Psoas muscle (tissue), 8 donors: ENCODE measurements at regions of chr17 and their contacts with region 1.

Region 1: DNA sequence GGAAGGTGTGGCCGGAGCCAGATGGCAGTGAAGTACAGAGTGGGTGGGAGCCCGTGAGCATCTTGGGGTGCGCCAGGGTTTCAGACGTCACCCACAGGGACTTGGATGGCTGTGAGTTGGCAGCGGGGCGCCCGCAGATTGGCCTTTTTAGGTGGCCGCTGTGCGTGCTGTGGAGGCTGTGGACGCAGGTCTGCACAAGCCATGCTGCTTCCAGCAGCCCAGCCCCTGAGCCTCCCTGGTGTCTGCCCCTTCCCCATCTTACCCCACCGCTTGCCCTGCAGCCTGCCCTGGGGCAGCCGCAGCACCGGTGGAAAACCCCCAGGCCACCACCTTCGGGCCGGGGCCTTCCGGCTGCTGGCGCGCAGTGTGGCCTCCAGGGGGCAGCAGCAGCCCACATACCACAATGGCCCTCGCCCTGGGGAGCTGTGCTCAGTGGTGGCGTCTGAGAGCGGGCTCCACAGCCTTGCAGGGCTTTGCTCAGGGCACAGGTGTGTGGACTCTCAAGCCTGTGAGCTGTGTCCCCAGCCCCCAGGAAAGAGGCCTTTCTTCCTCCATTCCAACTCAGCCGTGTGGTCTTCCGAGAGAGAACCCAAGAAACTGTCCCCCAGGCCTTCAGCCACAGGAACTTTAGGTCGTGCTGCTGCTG is 11.8 kb downstream of the ENDOV start:
- DNase-seq: peak; percentile 75 to 90
- ATAC-seq: peak; percentile 81 to 87 (median 82)
- H3K4me3 ChIP-seq: no peak overlapping the region
- H3K27ac ChIP-seq: no peak overlapping the region
- H3K4me1 ChIP-seq: peaks cover 17% of the 10 kb centered on the region
- H3K27me3 ChIP-seq: no peaks in the 10 kb centered on the region
- CTCF ChIP-seq: peak; percentile 97

Region 2: DNA sequence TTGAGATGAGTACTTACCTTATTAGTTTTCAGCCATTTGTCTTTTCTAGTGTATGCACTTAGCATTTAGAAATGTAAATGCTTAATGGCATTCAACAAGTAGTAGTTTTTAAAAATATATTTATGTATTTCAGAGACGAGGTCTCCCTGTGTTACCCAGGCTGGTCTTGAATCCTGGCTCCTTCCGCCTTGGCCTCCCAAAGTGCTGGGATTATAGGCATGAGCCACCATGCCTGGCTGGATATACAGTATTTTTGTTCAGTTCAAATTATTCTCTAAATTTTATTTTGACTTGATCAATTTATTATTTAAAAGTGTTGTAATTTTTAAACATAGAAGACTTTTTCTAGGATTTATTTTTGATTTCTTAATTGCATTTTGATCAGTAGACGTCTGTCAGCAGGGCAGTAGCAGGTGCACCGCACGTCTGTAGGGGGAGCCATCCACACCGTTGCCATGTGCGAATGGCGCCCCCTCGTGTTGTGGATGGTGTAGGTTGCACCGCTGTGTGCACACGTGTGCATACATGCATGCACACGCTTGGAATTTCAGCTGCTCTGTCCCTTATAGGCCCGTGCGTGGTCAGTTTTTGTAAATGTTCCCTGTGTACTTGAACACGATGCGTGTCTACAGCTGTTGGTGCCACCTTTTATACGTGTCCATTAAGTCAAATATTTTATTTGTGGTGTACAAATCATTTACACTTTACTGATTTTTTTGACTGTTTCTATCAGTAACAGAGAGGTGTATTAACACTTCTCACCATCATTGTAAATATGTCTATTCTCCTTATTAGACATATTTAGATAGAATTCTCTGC is 148.5 kb after region 1 on chr17:
- intact Hi-C with region 1: loop called (anchors 2 to 5 kb)
- DNase-seq: peak; percentile 83 to 90
- ATAC-seq: peak; percentile 88 to 97 (median 93)
- H3K4me3 ChIP-seq: no peak overlapping the region
- H3K27ac ChIP-seq: no peak overlapping the region
- H3K4me1 ChIP-seq: no peaks in the 10 kb centered on the region
- H3K27me3 ChIP-seq: no peaks in the 10 kb centered on the region
- CTCF ChIP-seq: peak; percentile 90

Region 3: DNA sequence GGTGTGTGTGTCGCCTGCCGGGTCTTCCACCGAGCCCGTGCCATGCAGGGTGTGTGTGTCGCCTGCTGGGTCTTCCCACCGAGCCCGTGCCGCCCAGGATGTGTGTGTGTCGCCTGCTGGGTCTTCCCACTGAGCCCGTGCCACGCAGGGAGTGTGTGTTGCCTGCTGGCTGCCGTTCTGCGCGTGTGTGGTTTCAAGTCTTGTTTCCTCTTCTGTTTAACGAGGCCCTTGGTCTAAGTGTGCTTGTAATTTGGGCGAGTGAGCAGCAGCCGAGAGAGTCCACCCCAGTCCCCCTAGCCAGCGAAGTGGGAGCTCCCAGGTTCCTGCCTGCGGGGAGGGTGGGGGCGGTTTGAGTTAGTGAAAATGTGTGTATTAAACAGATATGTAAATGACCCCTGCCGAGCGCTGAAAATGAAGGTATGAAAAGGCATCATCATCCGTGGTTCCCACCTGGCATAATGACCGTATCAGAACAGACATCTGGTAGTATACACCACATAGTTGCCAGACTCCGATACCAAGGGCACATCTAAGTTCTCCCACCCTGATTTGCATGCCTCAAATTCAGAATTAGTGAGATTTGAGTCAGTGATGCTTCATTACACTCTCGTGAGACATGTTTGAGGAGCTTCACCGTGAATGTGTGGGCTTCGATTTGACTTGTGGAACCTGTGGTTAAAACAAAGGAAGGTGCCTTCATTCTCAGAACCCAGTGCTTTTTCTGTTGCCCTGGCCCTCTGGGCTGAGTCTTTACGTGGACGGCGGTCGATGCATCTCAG is 450.3 kb after region 1 on chr17:
- intact Hi-C with region 1: loop called in 1 of 2 experiments (anchors 10 kb)
- DNase-seq: peak in 1 of 2 donors; percentile 36
- ATAC-seq: no peak
- H3K4me3 ChIP-seq: no peak overlapping the region
- H3K27ac ChIP-seq: no peak overlapping the region
- H3K4me1 ChIP-seq: peaks cover 40% of the 10 kb centered on the region
- H3K27me3 ChIP-seq: no peaks in the 10 kb centered on the region
- CTCF ChIP-seq: no peak

Region 4: GRCh38 chr17:80981062-80981902 is 554.5 kb after region 1 on chr17:
- intact Hi-C with region 1: loop called (anchors 2 kb)
- DNase-seq: peak in 1 of 2 donors; percentile 63
- ATAC-seq: peak; percentile 52 to 72 (median 62)
- H3K4me3 ChIP-seq: peak overlapping the region; percentile 36
- H3K27ac ChIP-seq: no peak overlapping the region
- H3K4me1 ChIP-seq: peaks cover 4% of the 10 kb centered on the region
- H3K27me3 ChIP-seq: peaks cover 0 to 7% (median 3%) of the 10 kb centered on the region in 3 donors
- CTCF ChIP-seq: peak; percentile 83

Region 5: GRCh38 chr17:81094509-81095382 is 667.9 kb after region 1 on chr17:
- intact Hi-C with region 1: loop called in 1 of 2 experiments (anchors 10 kb)
- DNase-seq: peak; percentile 78 to 81
- ATAC-seq: peak; percentile 42 to 72 (median 65)
- H3K4me3 ChIP-seq: no peak overlapping the region
- H3K27ac ChIP-seq: peak overlapping the region; percentile 53
- H3K4me1 ChIP-seq: peaks cover 28% of the 10 kb centered on the region
- H3K27me3 ChIP-seq: peaks cover 0 to 8% (median 0%) of the 10 kb centered on the region in 3 donors
- CTCF ChIP-seq: no peak